Activated T-helper 1 cell treated with anti-CD3 and anti-CD28 coated beads, Interleukin-12 subunit alpha, Interleukin-12 subunit beta, Interleukin-2, Interleukin-4 antibody, amounts not matched to agents 30 ng/mL and 10 ng/mL and 1 ng/mL, durations not matched to agents 14 hours and 24 hours and 36 hours (primary cell): ENCODE measurements at regions of chr3 and their contacts with region 1.

Region 1: DNA sequence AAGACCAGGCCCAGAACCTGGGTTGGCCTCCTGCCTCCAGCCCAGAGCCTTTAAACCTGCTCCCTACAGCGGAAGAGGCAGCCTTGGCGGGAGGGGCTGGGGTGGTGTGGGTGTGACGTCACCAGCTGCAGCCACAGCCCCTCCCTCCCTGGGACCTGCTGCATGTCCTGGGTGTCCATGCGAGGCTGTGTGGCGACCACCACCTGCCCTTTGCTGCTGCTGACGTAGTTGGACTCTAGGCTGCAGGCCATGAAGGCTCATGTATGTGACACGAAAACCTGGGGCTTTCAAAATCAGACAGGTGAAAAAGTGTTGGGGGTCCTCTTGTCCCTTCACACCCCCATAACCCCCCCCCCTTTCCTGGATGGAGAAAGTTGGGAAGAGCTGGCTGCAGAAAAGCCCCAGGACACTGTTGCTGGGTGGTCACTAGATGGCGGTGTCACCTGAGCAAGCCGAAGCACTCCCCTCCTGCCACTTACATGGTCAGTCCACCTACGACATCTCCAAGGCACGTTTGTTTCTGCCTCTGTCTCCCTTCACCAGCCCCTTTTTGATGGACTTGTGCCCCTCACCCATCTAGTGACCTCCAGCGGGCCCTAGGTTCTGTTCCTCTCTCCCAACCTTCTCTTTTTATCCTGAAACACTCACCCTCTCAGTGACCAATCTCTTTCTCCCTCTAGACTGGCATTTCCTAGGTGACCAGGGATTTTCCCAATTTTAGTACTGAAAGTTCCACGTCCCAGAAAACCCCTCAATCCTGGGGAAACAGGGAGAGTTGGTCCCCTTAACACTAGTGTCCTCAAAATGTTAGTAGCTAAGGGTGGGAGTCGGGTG is 35.2 kb downstream of the SLC6A20 start:
- DNase-seq: peak; percentile 20
- H3K4me3 Mint-ChIP-seq: no peak overlapping the region
- H3K27ac Mint-ChIP-seq: no peak overlapping the region
- H3K4me1 Mint-ChIP-seq: no peaks in the 10 kb centered on the region
- H3K27me3 Mint-ChIP-seq: peaks cover 8% of the 10 kb centered on the region

Region 2: GRCh38 chr3:44396200-44397171 is 1364.6 kb before region 1 on chr3:
- intact Hi-C with region 1: no loop called
- DNase-seq: no peak
- H3K4me3 Mint-ChIP-seq: no peak overlapping the region
- H3K27ac Mint-ChIP-seq: no peak overlapping the region
- H3K4me1 Mint-ChIP-seq: no peaks in the 10 kb centered on the region
- H3K27me3 Mint-ChIP-seq: no peaks in the 10 kb centered on the region

Region 3: DNA sequence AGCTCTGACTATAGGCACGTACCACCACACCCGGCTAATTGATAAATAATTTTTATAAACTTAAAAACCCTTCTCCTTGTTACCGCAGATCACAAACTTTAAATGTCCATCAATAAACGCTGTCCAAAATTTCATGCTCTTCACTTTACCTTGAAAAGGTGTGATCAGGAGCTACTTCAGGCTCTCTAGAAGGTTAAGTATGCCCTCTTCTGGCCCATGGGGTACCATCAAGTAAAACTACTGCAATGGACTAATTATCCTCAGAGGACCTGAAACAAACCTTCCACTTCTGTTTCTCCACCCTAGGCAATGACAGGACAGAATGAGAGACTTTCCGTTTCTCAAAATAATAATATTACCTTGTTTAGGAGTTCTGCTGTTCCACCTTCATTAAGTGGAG is 71.6 kb after region 1 on chr3:
- intact Hi-C with region 1: loop called (anchors 2 kb)
- DNase-seq: no peak
- H3K4me3 Mint-ChIP-seq: no peak overlapping the region
- H3K27ac Mint-ChIP-seq: no peak overlapping the region
- H3K4me1 Mint-ChIP-seq: no peaks in the 10 kb centered on the region
- H3K27me3 Mint-ChIP-seq: peaks cover 7% of the 10 kb centered on the region

Region 4: DNA sequence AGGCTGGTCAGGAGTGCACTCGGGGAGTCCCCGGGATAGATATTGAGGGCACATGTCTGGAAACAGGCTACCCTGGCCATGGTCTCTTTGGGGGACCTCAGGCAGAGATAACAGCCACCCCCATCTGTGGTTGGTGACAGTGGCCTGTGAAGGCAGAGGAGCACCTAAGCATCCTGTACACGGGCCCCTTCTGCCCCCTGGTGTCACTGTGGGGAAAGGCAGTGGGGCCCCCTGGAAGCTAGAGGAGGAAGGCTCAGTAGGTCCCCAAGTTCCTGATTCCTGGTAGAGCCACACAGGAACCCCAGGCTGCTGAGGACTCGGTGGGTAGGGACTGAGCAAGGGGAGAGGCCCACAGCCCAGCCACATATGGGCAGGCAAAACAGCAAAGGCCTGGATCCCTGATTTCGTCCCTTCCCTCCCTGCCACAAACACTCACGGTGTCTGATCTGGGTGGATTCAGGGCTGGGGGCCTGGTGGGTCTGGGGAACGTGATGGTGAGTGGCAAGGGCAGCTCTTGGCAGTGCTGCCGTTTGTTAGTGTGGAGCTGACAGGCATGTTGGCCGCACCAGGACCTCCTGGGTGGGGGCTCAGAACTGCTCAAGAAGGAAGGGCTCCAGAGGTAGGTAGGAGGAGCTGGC is 168.1 kb after region 1 on chr3:
- intact Hi-C with region 1: loop called (anchors 1 kb)
- DNase-seq: peak; percentile 47
- H3K4me3 Mint-ChIP-seq: no peak overlapping the region
- H3K27ac Mint-ChIP-seq: no peak overlapping the region
- H3K4me1 Mint-ChIP-seq: no peaks in the 10 kb centered on the region
- H3K27me3 Mint-ChIP-seq: no peaks in the 10 kb centered on the region

Region 5: DNA sequence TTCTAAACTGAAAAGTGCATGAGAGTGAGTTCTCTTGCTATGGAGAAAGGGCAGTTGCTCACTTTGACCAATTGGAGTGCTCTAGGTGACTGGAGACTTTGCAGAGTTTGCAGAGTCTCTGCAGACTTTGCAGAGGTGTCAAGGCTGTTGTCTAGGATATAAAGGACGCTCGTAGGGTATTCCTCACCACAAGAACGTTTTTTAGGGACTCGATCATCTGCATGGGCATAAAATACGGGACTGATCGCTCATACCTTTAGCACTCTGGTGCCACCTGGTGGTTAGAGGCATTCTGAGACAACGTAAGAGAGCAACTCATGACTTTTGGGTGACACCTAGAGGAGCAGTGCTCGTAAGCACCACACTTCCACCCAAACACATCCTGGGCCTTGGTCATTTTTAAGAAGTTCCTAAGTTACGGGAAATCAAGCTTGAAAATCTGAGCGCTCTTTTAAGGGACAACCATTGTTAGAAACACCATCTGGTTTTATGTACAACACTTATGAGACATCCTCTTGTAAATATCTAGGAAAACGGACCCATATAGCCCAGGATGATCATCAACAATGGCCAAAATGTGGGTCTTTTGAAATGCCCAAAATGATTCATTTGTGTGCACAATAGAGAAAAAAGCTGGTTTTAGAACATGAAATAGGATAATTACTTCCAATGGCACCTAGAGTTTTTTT is 317.8 kb after region 1 on chr3:
- intact Hi-C with region 1: loop called (anchors 1 kb)
- DNase-seq: peak; percentile 82
- H3K4me3 Mint-ChIP-seq: no peak overlapping the region
- H3K27ac Mint-ChIP-seq: no peak overlapping the region
- H3K4me1 Mint-ChIP-seq: peaks cover 74% of the 10 kb centered on the region
- H3K27me3 Mint-ChIP-seq: peaks cover 7% of the 10 kb centered on the region

Region 6: GRCh38 chr3:46378426-46378942 is 617.4 kb after region 1 on chr3:
- intact Hi-C with region 1: loop called (anchors 2 kb)
- DNase-seq: peak; percentile 55
- H3K4me3 Mint-ChIP-seq: no peak overlapping the region
- H3K27ac Mint-ChIP-seq: no peak overlapping the region
- H3K4me1 Mint-ChIP-seq: peaks cover 56% of the 10 kb centered on the region
- H3K27me3 Mint-ChIP-seq: peaks cover 8% of the 10 kb centered on the region